ENCODE measurements at regions of chr6 and their contacts with region 1.

Region 1: DNA sequence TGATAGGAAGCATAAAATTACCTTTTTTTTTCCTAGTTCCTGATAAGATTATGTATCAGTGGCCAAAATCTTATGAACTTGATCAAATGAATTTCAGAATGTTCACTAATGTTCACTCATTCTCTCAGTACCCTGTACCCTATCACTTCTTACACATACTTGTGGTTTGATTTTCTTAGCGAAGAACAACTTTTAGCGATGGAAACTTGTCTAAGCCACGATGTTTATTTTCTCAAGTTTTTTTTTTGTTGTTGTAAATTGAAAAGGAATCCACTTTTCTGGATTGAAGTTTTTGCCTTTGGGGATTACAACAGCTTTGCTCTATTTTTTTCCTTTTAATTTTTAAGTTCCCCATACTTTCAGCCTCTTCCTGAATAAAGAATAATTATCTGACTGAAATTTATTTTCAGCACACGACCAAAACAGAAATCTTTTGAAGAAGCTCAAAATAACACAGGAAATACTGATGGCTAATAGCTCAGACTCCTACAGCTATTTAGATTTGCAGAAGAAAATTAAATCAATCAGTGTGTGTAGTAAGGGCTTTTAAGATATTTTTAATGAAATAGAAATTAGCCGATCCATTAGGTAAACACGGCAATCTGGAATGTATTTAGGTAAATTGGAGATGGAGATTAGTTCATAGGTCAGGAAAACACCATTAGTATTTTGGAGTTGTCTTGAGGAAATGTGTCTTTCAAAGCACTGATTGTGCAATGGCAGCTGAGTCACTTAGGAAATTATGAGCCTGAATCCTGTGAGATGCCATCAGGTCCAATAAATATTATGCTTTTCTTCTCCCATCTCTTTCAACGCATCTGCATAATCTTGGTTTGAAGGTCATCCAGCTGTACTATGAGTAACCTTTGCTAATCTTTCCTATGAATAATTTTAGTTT is 217.5 kb downstream of the GJA1 start:
- DNase-seq: no peak
- ATAC-seq: no peak
- H3K4me3 ChIP-seq: no peak overlapping the region
- H3K4me3 Mint-ChIP-seq: peak overlapping the region in 9 of 10 donors; percentile 10 to 80 (median 62)
- H3K27ac ChIP-seq: no peak overlapping the region
- H3K27ac Mint-ChIP-seq: peak overlapping the region in 8 of 9 donors; percentile 75 to 91 (median 84)
- H3K4me1 ChIP-seq: peaks cover 0 to 29% of the 10 kb centered on the region in 2 donors
- H3K4me1 Mint-ChIP-seq: peaks cover 15 to 61% (median 46%) of the 10 kb centered on the region in 7 donors
- H3K27me3 ChIP-seq: no peaks in the 10 kb centered on the region
- H3K27me3 Mint-ChIP-seq: no peaks in the 10 kb centered on the region

Region 2: GRCh38 chr6:121436960-121437850 is 215.8 kb before region 1 on chr6:
- CTCF ChIA-PET with region 1: no interaction called
- POLR2A ChIA-PET with region 1: no interaction called
- intact Hi-C with region 1: loop called in 1 of 2 experiments (anchors 1 kb)
- DNase-seq: peak in 5 of 9 donors; percentile 6 to 26 (median 23)
- ATAC-seq: no peak
- H3K4me3 ChIP-seq: peak overlapping the region; percentile 59
- H3K4me3 Mint-ChIP-seq: peak overlapping the region; percentile 77 to 95 (median 88)
- H3K27ac ChIP-seq: no peak overlapping the region
- H3K27ac Mint-ChIP-seq: peak overlapping the region in 5 of 9 donors; percentile 36 to 72 (median 68)
- H3K4me1 ChIP-seq: peaks cover 0 to 7% of the 10 kb centered on the region in 2 donors
- H3K4me1 Mint-ChIP-seq: peaks cover 9 to 28% (median 20%) of the 10 kb centered on the region in 7 donors
- H3K27me3 ChIP-seq: peaks cover 0 to 4% of the 10 kb centered on the region in 2 donors
- H3K27me3 Mint-ChIP-seq: peaks cover 6 to 48% (median 25%) of the 10 kb centered on the region in 5 donors

Region 3: DNA sequence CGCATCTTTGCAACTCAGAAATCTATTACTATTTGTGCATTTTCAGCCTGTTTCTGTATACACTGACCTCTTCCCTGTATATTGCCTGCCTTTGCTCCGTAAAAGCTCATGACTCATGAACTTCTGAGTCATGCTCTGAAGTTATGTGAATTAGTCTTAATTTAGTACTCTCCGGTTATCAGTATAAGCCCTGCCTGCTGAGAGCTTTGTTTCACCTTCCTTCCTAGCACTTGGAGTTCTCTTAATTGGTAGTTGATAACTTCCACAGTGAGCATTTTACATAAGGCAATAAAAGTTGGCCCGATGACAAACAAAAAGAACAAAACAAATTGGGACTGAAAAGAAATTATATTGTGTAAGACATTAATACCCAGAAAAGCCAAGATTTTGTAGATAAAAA is 13.8 kb after region 1 on chr6:
- CTCF ChIA-PET with region 1: no interaction called
- POLR2A ChIA-PET with region 1: no interaction called
- intact Hi-C with region 1: loop called in 1 of 2 experiments (anchors 1 kb)
- DNase-seq: no peak
- ATAC-seq: no peak
- H3K4me3 ChIP-seq: no peak overlapping the region
- H3K4me3 Mint-ChIP-seq: no peak overlapping the region
- H3K27ac ChIP-seq: no peak overlapping the region
- H3K27ac Mint-ChIP-seq: no peak overlapping the region
- H3K4me1 ChIP-seq: no peaks in the 10 kb centered on the region
- H3K4me1 Mint-ChIP-seq: peaks cover 0 to 8% (median 0%) of the 10 kb centered on the region in 7 donors
- H3K27me3 ChIP-seq: no peaks in the 10 kb centered on the region
- H3K27me3 Mint-ChIP-seq: peaks cover 0 to 3% (median 0%) of the 10 kb centered on the region in 5 donors

Region 4: DNA sequence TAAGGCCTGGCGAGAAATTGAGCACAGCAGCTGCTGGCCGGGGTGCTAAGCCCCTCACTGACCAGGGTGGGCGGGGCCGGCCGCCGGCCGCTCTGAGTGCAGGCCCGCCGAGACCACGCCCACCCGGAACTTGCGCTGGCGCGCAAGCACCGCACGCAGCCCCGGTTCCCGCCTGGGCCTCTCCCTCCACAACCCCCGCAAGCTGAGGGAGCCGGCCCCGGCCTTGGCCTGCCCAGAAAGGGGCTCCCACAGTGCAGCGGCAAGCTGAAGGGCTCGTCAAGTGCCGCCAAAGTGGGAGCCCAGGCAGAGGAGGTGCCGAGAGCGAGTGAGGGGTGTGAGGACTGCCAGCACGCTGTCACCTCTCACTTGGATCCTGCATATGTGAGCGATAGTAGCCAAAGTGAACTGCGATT is 33.6 kb after region 1 on chr6:
- CTCF ChIA-PET with region 1: no interaction called
- POLR2A ChIA-PET with region 1: no interaction called
- intact Hi-C with region 1: loop called in 1 of 2 experiments (anchors 5 kb)
- DNase-seq: no peak
- ATAC-seq: no peak
- H3K4me3 ChIP-seq: no peak overlapping the region
- H3K4me3 Mint-ChIP-seq: no peak overlapping the region
- H3K27ac ChIP-seq: no peak overlapping the region
- H3K27ac Mint-ChIP-seq: no peak overlapping the region
- H3K4me1 ChIP-seq: peaks cover 0 to 22% of the 10 kb centered on the region in 2 donors
- H3K4me1 Mint-ChIP-seq: peaks cover 2 to 40% (median 26%) of the 10 kb centered on the region in 7 donors
- H3K27me3 ChIP-seq: no peaks in the 10 kb centered on the region
- H3K27me3 Mint-ChIP-seq: peaks cover 0 to 3% (median 0%) of the 10 kb centered on the region in 5 donors

Region 5: GRCh38 chr6:121733234-121733633 is 80.3 kb after region 1 on chr6:
- CTCF ChIA-PET with region 1: no interaction called
- POLR2A ChIA-PET with region 1: no interaction called
- intact Hi-C with region 1: no loop called
- DNase-seq: no peak
- ATAC-seq: no peak
- H3K4me3 ChIP-seq: no peak overlapping the region
- H3K4me3 Mint-ChIP-seq: no peak overlapping the region
- H3K27ac ChIP-seq: no peak overlapping the region
- H3K27ac Mint-ChIP-seq: no peak overlapping the region
- H3K4me1 ChIP-seq: no peaks in the 10 kb centered on the region
- H3K4me1 Mint-ChIP-seq: no peaks in the 10 kb centered on the region
- H3K27me3 ChIP-seq: no peaks in the 10 kb centered on the region
- H3K27me3 Mint-ChIP-seq: no peaks in the 10 kb centered on the region

Region 6: GRCh38 chr6:121764493-121764892 is 111.5 kb after region 1 on chr6:
- CTCF ChIA-PET with region 1: no interaction called
- POLR2A ChIA-PET with region 1: no interaction called
- intact Hi-C with region 1: no loop called
- DNase-seq: no peak
- ATAC-seq: no peak
- H3K4me3 ChIP-seq: no peak overlapping the region
- H3K4me3 Mint-ChIP-seq: no peak overlapping the region
- H3K27ac ChIP-seq: no peak overlapping the region
- H3K27ac Mint-ChIP-seq: no peak overlapping the region
- H3K4me1 ChIP-seq: no peaks in the 10 kb centered on the region
- H3K4me1 Mint-ChIP-seq: peaks cover 2 to 21% (median 15%) of the 10 kb centered on the region in 7 donors
- H3K27me3 ChIP-seq: no peaks in the 10 kb centered on the region
- H3K27me3 Mint-ChIP-seq: no peaks in the 10 kb centered on the region